Activated CD8-positive, alpha-beta T cell treated with anti-CD3 and anti-CD28 coated beads, Interleukin-2, amount 10 ng/mL, durations not matched to agents 7 days and 5 days (primary cell): ENCODE measurements at regions of chr7 and their contacts with region 1.

Region 1: GRCh38 chr7:106153891-106154449 is 41.9 kb upstream of the SYPL1 start:
- DNase-seq: peak; percentile 77
- ATAC-seq: peak; percentile 94
- H3K4me3 Mint-ChIP-seq: no peak overlapping the region
- H3K27ac Mint-ChIP-seq: no peak overlapping the region
- H3K4me1 Mint-ChIP-seq: peaks cover 16% of the 10 kb centered on the region
- H3K27me3 Mint-ChIP-seq: peaks cover 32% of the 10 kb centered on the region

Region 2: GRCh38 chr7:106050011-106050745 is 103.8 kb before region 1 on chr7:
- CTCF ChIA-PET with region 1: interaction called, 11 read pairs
- POLR2A ChIA-PET with region 1: no interaction called
- DNase-seq: no peak
- ATAC-seq: no peak
- H3K4me3 Mint-ChIP-seq: no peak overlapping the region
- H3K27ac Mint-ChIP-seq: no peak overlapping the region
- H3K4me1 Mint-ChIP-seq: no peaks in the 10 kb centered on the region
- H3K27me3 Mint-ChIP-seq: peaks cover 7% of the 10 kb centered on the region

Region 3: DNA sequence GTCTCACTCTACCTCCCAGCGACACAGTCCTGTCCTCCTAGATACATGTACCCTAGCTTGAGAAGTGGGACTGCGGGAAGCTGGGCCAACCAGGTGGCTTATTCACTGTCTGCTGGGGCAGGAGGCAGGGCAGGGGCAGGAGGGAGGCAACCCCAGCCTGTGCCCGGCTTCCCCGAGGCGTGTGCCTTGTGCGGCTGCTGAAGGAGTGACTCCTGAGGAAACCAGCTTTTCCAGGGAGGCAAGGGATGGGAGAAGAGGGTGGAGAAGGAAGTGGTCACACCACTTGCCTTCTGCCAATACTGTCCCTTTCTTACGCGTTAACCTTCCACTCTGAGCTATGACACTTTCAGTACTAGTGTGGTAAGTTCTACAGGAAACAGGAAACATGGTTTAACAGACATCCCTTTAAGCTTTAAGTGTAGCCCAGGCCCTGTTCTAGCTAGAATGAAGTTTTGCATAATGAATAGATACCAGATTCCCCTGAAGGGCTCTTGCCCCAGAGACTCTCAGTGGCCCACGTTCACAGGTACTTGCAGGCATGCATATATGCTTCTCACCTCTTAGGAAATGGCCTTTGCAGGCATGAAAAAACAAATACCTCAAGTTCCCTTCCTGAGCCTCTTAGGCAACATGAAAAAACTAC is 82.5 kb before region 1 on chr7:
- CTCF ChIA-PET with region 1: interaction called, 51 read pairs
- POLR2A ChIA-PET with region 1: interaction called, 7 read pairs
- DNase-seq: peak; percentile 68
- ATAC-seq: peak; percentile 98
- H3K4me3 Mint-ChIP-seq: peak overlapping the region; percentile 76
- H3K27ac Mint-ChIP-seq: peak overlapping the region; percentile 99
- H3K4me1 Mint-ChIP-seq: peaks cover 72% of the 10 kb centered on the region
- H3K27me3 Mint-ChIP-seq: no peaks in the 10 kb centered on the region

Region 4: DNA sequence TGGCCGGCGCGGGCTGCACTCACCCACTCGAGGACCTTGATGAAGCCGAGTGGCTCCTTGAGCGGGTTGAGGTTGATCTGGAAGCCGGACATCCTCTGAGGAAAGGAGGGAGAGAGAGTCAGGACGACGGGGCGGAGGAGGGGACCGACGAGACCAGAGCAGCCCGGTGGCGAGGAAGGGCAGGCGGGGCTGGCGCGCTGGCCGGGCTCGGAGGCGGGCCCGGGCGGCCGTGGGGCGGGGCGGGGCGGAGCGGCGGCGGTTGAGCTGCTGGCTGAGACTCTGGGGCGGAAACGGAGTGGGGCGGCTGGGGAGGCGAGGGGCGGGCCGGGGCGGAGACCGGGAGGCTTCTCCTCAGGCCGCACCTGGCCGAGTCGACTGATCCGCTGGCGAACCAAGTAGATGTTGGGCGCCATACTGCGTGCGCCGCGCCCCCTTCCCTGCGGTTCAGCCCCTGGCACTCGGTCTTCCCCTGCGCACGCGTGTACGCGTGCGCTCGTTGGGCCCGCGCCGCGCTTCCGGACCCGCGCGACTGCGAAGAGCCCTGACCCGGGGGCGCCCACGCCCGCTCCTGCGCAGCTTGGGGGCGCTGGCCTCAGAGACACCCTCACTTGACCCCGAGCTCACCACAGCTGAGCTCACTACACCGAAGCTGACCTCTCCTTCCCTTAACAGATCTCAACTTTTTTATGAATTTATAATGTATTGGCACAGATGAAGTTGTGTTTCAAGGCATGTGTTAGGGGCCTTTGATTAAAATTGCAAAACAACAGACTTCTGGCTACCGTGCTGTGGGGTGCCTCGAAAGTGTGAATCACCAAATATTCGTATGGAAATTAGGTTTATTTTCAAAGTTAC is 41.6 kb before region 1 on chr7 and contains the start of gene SYPL1:
- CTCF ChIA-PET with region 1: interaction called, 26 read pairs
- POLR2A ChIA-PET with region 1: interaction called, 6 read pairs
- DNase-seq: peak; percentile 95
- ATAC-seq: peak; percentile 87
- H3K4me3 Mint-ChIP-seq: peak within 1 kb of the TSS; percentile 83
- H3K27ac Mint-ChIP-seq: peak within 1 kb of the TSS; percentile 93
- H3K4me1 Mint-ChIP-seq: peaks cover 57% of the 10 kb centered on the region
- H3K27me3 Mint-ChIP-seq: no peaks in the 10 kb centered on the region
- total RNA-seq, gene SYPL1: 51.3 to 52.4 TPM

Region 5: GRCh38 chr7:106143711-106144337 is 10.1 kb before region 1 on chr7:
- CTCF ChIA-PET with region 1: interaction called, 13 read pairs
- POLR2A ChIA-PET with region 1: no interaction called
- DNase-seq: no peak
- ATAC-seq: no peak
- H3K4me3 Mint-ChIP-seq: no peak overlapping the region
- H3K27ac Mint-ChIP-seq: no peak overlapping the region
- H3K4me1 Mint-ChIP-seq: no peaks in the 10 kb centered on the region
- H3K27me3 Mint-ChIP-seq: peaks cover 10% of the 10 kb centered on the region

Region 6: GRCh38 chr7:106187613-106188350 is 33.8 kb after region 1 on chr7:
- CTCF ChIA-PET with region 1: no interaction called
- POLR2A ChIA-PET with region 1: no interaction called
- DNase-seq: no peak
- ATAC-seq: no peak
- H3K4me3 Mint-ChIP-seq: no peak overlapping the region
- H3K27ac Mint-ChIP-seq: no peak overlapping the region
- H3K4me1 Mint-ChIP-seq: peaks cover 9% of the 10 kb centered on the region
- H3K27me3 Mint-ChIP-seq: peaks cover 15% of the 10 kb centered on the region